GM12878 (cell line): ENCODE measurements at regions of chr2 and their contacts with region 1.

Region 1: DNA sequence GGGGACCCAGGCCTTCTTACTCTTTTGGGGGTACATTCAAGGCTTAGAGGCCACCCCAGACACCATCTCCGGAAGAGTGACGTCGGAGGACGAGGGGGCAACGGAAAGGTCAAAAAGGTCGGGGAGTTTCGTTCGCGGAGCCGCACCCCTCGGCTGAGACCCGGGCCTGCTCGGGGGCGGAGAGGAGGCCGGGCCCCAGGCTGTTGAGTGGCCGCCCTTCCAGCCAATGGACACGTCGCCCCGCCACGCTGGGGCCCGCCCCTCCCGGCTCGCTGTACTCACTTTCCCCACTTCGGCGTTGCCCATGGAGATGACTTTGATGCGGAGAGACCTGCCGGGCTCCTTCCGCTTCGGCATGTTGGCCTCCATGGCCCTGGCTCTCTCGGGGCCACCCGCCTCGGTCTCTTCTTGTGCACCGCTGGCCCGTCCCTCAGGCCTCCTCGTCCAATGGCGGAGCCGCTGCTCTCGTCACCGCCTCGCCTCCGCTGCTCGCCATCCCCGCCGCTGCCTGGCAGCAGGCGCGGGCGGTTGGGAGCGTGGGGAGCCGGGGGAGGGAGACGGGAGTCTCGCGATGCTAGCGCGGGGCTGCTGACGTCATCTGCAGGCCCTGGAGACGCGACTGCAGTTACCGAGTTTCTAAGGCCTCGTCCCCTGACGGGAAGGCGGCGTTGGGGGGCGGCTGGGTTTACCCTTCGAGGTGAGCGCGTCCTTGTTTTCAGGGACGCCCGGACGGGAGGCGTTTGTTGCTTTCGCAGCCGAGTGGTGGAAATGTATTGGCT is at the start of gene DNAJC27:
- DNase-seq: peak; percentile 93
- ATAC-seq: peak; percentile 97
- H3K4me3 ChIP-seq: peak within 1 kb of the TSS; percentile 78
- H3K27ac ChIP-seq: peak within 1 kb of the TSS; percentile 95
- H3K4me1 ChIP-seq: no peaks in the 10 kb centered on the region
- H3K27me3 ChIP-seq: no peaks in the 10 kb centered on the region
- CTCF ChIP-seq: no peak
- EP300 ChIP-seq: no peak
- POLR2A ChIP-seq: peak; percentile 83
- RAD21 ChIP-seq: no peak
- polyA plus RNA-seq, gene DNAJC27: 0.95 to 1.3 TPM

Region 2: GRCh38 chr2:24409700-24410556 is 561.8 kb before region 1 on chr2:
- CTCF ChIA-PET with region 1: interaction called, 14 read pairs
- POLR2A ChIA-PET with region 1: no interaction called
- RAD21 ChIA-PET with region 1: interaction called, 3 read pairs
- SMC1A ChIA-PET with region 1: interaction called, 5 read pairs
- in situ Hi-C with region 1: no loop called
- intact Hi-C with region 1: loop called (anchors 5 kb)
- DNase-seq: peak; percentile 31
- ATAC-seq: peak; percentile 91
- H3K4me3 ChIP-seq: no peak overlapping the region
- H3K27ac ChIP-seq: no peak overlapping the region
- H3K4me1 ChIP-seq: no peaks in the 10 kb centered on the region
- H3K27me3 ChIP-seq: no peaks in the 10 kb centered on the region
- CTCF ChIP-seq: peak; percentile 79 to 89 (median 82)
- EP300 ChIP-seq: no peak
- POLR2A ChIP-seq: no peak
- RAD21 ChIP-seq: peak; percentile 97

Region 3: DNA sequence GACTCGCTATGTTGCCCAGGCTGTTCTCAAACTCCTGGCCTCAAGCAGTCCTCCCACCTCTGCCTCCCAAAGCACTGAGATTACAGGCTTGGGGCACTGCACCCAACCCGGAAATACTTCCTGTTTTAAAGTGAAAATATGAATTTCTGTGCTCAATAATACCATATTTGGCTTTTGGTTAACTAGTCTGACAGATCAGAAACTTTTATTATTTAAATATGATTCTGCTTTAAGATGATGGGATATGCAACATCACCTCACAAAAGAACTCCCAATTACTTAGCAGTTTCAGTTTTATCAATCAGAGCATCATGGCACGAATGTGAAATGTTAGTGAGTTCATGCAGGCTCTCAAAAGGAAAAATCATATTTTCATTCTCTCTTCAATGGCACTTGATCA is 299.1 kb before region 1 on chr2:
- CTCF ChIA-PET with region 1: no interaction called
- POLR2A ChIA-PET with region 1: no interaction called
- RAD21 ChIA-PET with region 1: no interaction called
- SMC1A ChIA-PET with region 1: no interaction called
- in situ Hi-C with region 1: no loop called
- intact Hi-C with region 1: no loop called
- DNase-seq: no peak
- ATAC-seq: no peak; the same call in 2 of the 3 replicates
- H3K4me3 ChIP-seq: no peak overlapping the region
- H3K27ac ChIP-seq: no peak overlapping the region
- H3K4me1 ChIP-seq: no peaks in the 10 kb centered on the region
- H3K27me3 ChIP-seq: no peaks in the 10 kb centered on the region
- CTCF ChIP-seq: no peak
- EP300 ChIP-seq: no peak
- POLR2A ChIP-seq: no peak
- RAD21 ChIP-seq: no peak

Region 4: DNA sequence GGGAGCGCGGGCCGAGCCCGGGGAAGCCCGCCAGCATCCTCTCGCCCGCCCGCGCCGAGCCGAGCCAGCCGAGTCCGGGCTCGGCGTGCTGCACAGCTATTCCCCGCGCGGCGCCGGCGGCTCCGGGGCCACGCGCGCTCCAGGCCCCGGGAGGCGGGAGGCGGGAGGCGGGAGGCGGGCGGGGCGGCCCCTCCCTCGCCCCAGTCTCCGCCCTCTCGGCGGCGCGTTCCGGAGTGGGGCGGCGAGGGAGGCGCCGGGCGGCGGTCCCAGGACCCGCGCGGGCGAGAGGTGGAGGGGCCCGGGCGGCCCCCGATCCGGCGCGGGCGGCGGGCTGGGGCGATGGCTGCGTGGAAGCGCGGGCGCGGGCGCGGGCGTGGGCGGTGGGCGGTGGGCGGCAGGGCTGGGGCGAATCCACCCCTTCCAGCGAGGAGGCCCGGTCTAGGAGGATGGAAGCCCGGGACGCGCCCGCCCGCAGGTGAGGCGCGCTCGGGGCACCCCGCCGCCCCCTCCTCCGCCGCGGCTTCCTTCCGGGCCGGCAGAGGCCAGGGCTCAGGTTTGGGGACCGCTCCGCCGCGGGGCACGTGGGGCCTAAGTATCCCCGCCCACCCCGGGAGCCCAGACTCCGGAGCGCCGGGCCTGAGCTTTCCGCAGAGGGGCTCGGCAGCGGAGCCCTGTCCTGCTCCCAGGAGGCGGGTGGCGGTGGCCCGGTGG is 51.5 kb before region 1 on chr2 and contains the start of gene ADCY3:
- CTCF ChIA-PET with region 1: interaction called, 3 read pairs
- POLR2A ChIA-PET with region 1: no interaction called
- RAD21 ChIA-PET with region 1: no interaction called
- SMC1A ChIA-PET with region 1: no interaction called
- in situ Hi-C with region 1: no loop called
- intact Hi-C with region 1: loop called (anchors 2 kb)
- DNase-seq: no peak
- ATAC-seq: peak; percentile 73
- H3K4me3 ChIP-seq: peak within 1 kb of the TSS; percentile 92
- H3K27ac ChIP-seq: peak within 1 kb of the TSS; percentile 39
- H3K4me1 ChIP-seq: peaks cover 28% of the 10 kb centered on the region
- H3K27me3 ChIP-seq: no peaks in the 10 kb centered on the region
- CTCF ChIP-seq: no peak
- EP300 ChIP-seq: no peak
- POLR2A ChIP-seq: peak; percentile 49; the same call in 1 of the 2 replicates
- RAD21 ChIP-seq: no peak
- polyA plus RNA-seq, gene ADCY3: 2.8 to 8.6 TPM

Region 5: DNA sequence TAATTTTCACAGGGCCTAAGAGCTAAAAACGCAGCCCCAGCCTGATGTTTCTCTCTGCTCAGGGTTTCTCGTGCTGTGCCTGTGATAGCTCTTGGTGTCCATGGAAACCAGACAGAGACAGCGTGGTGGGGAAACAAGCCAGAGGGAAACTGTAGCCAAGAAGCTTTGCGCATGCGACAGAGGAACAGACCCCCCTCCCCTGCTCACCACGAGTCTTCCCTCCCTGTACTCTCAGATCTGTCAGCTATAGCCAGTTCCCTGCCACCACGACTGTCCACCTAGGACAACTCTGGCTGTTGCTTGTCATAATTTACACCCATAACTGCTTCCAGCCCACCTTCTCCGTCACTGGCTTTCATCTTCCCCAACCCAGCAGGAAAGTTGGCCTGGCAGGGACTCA is 13.2 kb after region 1 on chr2:
- CTCF ChIA-PET with region 1: interaction called, 14 read pairs
- POLR2A ChIA-PET with region 1: interaction called, 4 read pairs
- RAD21 ChIA-PET with region 1: no interaction called
- SMC1A ChIA-PET with region 1: interaction called, 7 read pairs
- in situ Hi-C with region 1: no loop called
- intact Hi-C with region 1: no loop called
- DNase-seq: no peak
- ATAC-seq: no peak
- H3K4me3 ChIP-seq: no peak overlapping the region
- H3K27ac ChIP-seq: no peak overlapping the region
- H3K4me1 ChIP-seq: no peaks in the 10 kb centered on the region
- H3K27me3 ChIP-seq: no peaks in the 10 kb centered on the region
- CTCF ChIP-seq: no peak
- EP300 ChIP-seq: no peak
- POLR2A ChIP-seq: no peak
- RAD21 ChIP-seq: no peak

Region 6: DNA sequence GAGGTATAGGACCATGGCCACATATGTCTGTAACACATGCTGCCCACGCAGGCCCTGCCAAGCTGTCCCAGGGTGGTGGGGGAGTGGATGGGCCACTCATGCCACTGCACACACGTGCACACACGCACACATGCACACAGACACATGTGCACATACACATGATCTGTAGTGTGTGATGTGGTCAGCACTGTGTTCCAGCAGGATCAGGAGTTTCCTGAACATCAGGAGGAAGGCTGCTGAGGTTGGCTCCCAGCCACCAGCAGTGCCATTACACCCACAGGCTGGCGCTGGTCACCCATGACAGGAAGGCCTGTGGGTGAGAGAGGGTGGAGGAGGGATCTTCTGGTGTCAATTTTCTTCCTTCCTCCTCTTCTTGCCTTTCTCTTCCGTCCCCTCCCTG is 152.0 kb after region 1 on chr2:
- CTCF ChIA-PET with region 1: interaction called, 174 read pairs
- POLR2A ChIA-PET with region 1: interaction called, 6 read pairs
- RAD21 ChIA-PET with region 1: interaction called, 97 read pairs
- SMC1A ChIA-PET with region 1: interaction called, 74 read pairs
- in situ Hi-C with region 1: loop called (anchors 5 kb)
- intact Hi-C with region 1: no loop called
- DNase-seq: no peak
- ATAC-seq: no peak
- H3K4me3 ChIP-seq: no peak overlapping the region
- H3K27ac ChIP-seq: no peak overlapping the region
- H3K4me1 ChIP-seq: no peaks in the 10 kb centered on the region
- H3K27me3 ChIP-seq: no peaks in the 10 kb centered on the region; a peak in 1 of 4 replicates
- CTCF ChIP-seq: no peak
- EP300 ChIP-seq: no peak
- POLR2A ChIP-seq: no peak
- RAD21 ChIP-seq: no peak

Region 7: GRCh38 chr2:25131567-25132298 is 160.0 kb after region 1 on chr2:
- CTCF ChIA-PET with region 1: interaction called, 174 read pairs
- POLR2A ChIA-PET with region 1: interaction called, 6 read pairs
- RAD21 ChIA-PET with region 1: interaction called, 97 read pairs
- SMC1A ChIA-PET with region 1: interaction called, 74 read pairs
- in situ Hi-C with region 1: loop called (anchors 5 kb)
- intact Hi-C with region 1: loop called (anchors 1 kb)
- DNase-seq: no peak
- ATAC-seq: no peak
- H3K4me3 ChIP-seq: no peak overlapping the region
- H3K27ac ChIP-seq: no peak overlapping the region
- H3K4me1 ChIP-seq: no peaks in the 10 kb centered on the region
- H3K27me3 ChIP-seq: peaks cover 0 to 5% of the 10 kb centered on the region in 2 experiments; a peak in 3 of 4 replicates
- CTCF ChIP-seq: no peak
- EP300 ChIP-seq: no peak
- POLR2A ChIP-seq: no peak
- RAD21 ChIP-seq: no peak

Region 8: DNA sequence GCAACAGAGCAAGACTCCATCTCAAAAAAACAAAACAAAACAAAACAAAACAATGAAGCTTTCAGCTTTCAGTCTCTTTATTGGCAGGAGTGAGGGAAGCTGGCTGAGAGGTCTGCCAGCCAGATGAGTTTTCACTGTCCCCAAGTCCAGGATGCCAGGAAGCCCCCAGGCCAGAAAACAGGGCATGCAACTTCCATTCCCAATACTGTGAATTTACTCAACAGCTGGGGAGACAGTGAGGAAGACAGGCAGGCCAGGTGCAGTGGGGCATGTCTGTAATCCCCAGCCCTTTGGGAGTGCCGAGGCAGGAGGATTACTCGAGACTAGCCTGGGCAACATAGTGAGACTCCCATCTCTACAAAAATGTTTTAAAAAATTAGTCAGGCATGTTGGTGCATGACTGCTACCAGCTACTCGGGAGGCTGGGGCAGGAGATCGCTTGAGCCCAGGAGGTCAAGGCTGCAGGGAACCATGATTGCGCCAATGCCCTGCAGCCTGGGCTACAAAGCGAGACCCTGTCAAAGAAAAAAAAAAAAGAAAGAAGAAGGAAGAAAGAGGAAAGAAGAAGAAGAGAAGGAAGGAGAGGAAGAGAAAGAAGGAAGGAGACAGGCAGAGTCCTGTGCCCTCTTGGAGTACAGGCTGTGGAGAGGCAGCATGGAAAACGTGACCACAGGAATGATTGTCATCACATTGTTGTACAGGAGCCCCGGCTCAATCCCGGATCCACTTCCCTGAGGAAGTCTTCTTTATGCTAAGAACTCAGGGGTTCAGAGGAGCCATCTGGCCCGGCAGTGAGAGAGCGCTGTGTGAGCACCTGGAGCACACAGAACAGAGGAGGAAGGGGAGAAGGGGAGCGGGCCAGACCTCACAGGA is 225.8 kb after region 1 on chr2:
- CTCF ChIA-PET with region 1: interaction called, 55 read pairs
- POLR2A ChIA-PET with region 1: no interaction called
- RAD21 ChIA-PET with region 1: interaction called, 11 read pairs
- SMC1A ChIA-PET with region 1: interaction called, 14 read pairs
- in situ Hi-C with region 1: loop called (anchors 5 kb)
- intact Hi-C with region 1: loop called (anchors 2 kb)
- DNase-seq: no peak
- ATAC-seq: no peak
- H3K4me3 ChIP-seq: no peak overlapping the region
- H3K27ac ChIP-seq: no peak overlapping the region
- H3K4me1 ChIP-seq: peaks cover 7% of the 10 kb centered on the region; the same call in 1 of the 2 replicates
- H3K27me3 ChIP-seq: no peaks in the 10 kb centered on the region
- CTCF ChIP-seq: no peak
- EP300 ChIP-seq: no peak
- POLR2A ChIP-seq: no peak
- RAD21 ChIP-seq: no peak